GM10248 (cell line): ENCODE measurements at regions of chr2 and their contacts with region 1.

Region 1: DNA sequence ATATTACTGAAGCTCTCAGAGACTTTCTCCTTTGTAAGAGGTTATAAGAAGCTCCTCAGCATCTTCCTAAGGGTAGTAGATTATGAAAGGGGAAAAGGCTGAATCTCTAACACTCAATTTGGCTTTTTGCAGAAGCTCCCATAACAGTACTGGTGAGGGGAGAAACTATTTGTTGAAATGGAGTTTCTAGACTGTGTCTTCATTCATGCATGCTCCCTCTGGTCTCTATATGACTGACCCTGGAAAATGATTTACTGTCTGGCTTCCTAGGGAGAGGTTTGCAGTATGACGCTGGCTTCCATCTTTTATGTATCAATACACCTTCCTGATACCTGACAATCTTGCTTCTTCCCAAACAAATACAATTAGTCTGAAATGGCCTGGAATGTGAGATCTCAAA is 63.9 kb downstream of the LDAH start:
- DNase-seq: no peak
- CTCF ChIP-seq: no peak

Region 2: DNA sequence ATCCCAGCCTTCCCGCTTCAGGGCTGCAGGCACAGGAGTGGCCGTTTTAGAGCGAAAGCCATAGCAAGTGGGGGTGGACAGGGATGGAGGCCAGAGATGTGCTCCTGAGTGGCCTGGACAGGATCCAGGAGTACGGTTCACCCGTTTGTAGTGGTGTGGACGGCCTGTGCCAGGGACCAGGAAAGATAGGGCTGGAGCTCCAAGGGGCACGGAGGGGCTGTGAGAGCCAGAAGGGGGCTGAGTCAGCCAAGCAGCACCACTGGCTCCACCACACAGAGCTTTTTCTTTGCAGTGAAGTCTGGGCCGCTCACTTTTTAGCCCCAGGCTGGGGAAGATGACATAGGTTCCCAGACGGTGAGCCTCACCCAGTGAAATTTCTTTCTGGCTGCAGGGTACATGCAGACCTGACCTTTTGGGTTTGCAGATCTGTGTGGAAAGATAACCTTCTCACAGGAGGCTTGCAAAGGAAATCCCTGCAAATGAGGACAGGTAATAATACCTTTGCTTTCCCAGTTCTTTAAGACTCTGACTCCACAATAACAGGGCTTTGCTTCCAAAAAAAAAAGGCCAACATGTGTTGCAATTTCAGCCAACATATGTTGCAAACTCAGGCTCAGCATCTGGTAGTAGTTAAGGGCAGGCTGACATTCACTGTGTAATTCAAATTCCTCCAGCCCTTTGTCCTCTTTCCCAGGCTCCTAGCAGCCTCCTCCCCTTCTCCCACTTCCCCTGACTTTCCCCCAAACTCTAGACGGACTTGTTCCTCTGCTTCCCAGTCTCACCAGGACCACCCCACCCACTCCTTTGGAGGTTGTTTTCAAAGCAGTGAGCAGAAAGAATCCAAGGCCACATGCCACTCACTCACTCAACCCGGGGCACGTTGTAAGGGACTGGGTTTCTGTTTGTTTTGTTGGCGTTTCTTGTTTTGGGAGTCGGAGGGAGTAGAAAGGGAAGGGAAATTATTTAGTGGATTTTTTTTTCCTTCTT is 687.3 kb before region 1 on chr2:
- CTCF ChIA-PET with region 1: no interaction called
- POLR2A ChIA-PET with region 1: no interaction called
- DNase-seq: no peak
- CTCF ChIP-seq: no peak

Region 3: GRCh38 chr2:20745924-20746555 is 13.0 kb before region 1 on chr2:
- CTCF ChIA-PET with region 1: interaction called, 28 read pairs
- POLR2A ChIA-PET with region 1: no interaction called
- DNase-seq: no peak
- CTCF ChIP-seq: no peak

Region 4: DNA sequence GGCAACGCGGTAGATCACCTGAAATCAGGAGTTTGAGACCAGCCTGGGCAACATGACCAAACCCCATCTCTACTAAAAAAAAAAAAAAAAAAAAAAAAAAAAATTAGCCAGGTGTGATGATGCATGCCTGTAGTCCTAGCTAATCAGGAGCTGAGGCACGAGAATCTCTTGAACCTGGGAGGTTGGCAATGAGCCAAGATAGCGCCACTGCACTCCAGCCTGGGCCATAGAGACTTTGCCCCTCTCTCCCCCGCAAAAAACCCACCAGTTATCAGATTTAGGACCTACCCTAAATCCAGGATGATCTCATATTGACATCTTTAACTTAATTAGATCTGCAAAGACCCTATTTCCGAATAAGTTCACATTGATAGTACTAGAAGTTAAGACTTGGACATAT is 93.1 kb after region 1 on chr2:
- CTCF ChIA-PET with region 1: no interaction called
- POLR2A ChIA-PET with region 1: no interaction called
- DNase-seq: no peak
- CTCF ChIP-seq: no peak

Region 5: GRCh38 chr2:20888216-20888615 is 129.2 kb after region 1 on chr2:
- CTCF ChIA-PET with region 1: no interaction called
- POLR2A ChIA-PET with region 1: no interaction called
- DNase-seq: no peak
- CTCF ChIP-seq: no peak

Region 6: DNA sequence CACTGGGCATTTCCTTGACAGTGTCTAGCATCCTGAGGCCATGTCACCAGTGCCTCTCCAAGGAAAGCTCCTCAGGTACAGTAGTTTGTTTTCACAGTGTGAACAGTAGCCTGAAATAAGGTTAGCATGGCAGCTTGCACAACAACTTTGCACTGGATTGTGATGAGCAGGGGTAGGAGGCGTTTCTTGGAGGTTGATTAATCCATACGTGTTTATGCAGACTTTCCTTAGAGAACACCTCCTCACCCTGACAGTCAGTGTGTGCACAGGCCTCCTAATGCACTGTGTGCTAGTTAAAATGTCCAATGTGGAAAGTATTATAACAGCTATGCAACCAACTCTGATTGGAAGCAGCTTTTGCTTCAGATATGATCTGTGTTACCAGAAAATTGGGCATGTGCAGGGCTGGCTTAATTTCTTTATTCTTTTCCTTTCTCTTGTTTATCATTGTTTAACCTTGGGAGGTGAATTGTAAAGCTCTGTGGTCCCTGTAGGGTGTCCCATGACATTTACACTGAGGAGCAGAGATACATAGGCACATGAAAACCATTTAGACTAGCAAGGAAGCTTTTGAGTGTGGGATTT is 141.1 kb after region 1 on chr2:
- CTCF ChIA-PET with region 1: no interaction called
- POLR2A ChIA-PET with region 1: no interaction called
- DNase-seq: no peak
- CTCF ChIP-seq: no peak